HEK293 (cell line): ENCODE measurements at regions of chr17 and their contacts with region 1.

Region 1: DNA sequence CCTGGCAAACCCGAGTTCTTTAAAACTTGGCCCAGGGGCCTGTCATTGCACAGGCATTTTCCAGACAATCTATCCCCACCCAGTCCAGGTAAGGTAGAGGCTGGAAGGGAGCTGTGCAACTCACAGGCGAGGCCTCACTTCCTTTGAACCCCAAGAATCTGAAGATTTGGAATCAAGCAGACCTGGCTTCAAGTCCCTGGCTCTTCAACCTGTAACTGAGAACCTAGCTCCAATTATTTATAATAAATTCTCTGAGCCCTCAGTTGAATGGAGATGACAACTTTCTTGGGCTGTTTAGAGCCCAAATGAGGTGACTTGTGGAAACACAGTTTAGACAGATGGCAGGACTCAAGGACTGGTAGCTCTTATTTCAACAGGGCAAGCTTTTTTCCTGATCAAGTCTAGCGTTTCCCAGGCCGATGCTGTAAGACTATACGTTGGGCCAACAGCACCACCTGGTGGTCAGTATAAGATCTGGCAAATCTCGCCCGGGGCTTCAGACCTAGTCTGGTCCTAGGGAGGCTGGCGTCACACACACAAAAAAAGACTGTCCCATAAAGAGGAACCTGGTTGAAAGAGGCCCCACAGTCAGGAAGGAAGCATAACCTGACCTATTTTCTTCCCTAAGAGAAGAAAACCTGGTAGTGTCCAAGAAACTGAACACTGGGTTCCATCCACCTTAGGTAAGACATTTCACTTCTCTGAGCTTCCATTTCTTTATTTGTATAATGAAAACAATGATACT is 117.9 kb downstream of the C17orf67 start:
- H3K4me3 ChIP-seq: no peak overlapping the region
- H3K27ac ChIP-seq: no peak overlapping the region
- H3K4me1 ChIP-seq: no peaks in the 10 kb centered on the region
- CTCF ChIP-seq: peak; percentile 52; the same call in 1 of the 2 replicates

Region 2: GRCh38 chr17:56577190-56577842 is 138.5 kb before region 1 on chr17:
- CTCF ChIA-PET with region 1: interaction called, 10 read pairs
- POLR2A ChIA-PET with region 1: no interaction called
- H3K4me3 ChIP-seq: no peak overlapping the region
- H3K27ac ChIP-seq: no peak overlapping the region
- H3K4me1 ChIP-seq: no peaks in the 10 kb centered on the region
- CTCF ChIP-seq: no peak

Region 3: DNA sequence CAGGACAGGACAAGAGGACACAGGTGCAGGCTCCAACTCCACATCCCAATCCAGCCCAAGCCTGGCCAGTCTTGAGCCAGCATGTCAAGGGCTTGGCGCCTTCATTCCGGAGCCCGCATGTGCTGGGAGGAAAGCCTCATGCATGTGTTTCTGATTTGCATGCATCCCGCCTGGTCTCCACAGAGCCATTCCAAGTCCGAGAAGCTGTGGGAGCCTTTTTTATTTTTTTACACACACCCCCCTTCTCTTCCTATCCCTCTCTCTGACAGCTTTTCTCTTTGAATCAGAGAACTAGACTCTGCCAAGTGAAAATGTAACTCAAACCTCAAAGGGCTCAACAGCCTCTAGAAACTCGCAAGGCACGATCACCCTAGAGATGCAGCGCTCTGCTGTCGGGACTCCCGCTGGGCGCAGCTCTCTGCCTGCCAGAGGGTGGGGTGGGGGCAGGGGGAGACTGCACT is 77.2 kb before region 1 on chr17:
- CTCF ChIA-PET with region 1: interaction called, 16 read pairs
- POLR2A ChIA-PET with region 1: no interaction called
- H3K4me3 ChIP-seq: no peak overlapping the region
- H3K27ac ChIP-seq: no peak overlapping the region
- H3K4me1 ChIP-seq: no peaks in the 10 kb centered on the region; the same call in 1 of the 2 replicates
- CTCF ChIP-seq: no peak

Region 4: GRCh38 chr17:56679115-56679766 is 36.5 kb before region 1 on chr17:
- CTCF ChIA-PET with region 1: interaction called, 103 read pairs
- POLR2A ChIA-PET with region 1: no interaction called
- H3K4me3 ChIP-seq: no peak overlapping the region
- H3K27ac ChIP-seq: no peak overlapping the region
- H3K4me1 ChIP-seq: no peaks in the 10 kb centered on the region
- CTCF ChIP-seq: no peak

Region 5: DNA sequence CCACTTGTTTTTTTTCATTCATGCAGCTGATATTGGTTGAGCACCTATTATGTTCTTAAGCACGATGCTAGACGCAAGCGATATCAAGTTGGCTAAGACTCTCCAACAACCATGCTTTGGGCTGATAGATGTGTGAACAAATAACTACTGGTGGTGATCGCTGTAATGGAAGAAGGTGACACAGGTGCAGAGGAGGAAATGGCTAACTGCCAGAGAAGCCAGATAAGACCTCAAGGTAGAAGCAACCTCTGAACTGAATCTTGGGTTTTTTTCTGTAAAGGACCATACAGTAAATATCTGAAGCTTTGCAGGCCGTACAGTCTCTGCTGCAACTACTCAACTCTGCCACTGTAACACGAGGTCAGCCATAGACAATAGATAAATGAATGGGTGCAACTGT is 20.1 kb after region 1 on chr17:
- CTCF ChIA-PET with region 1: interaction called, 10 read pairs
- POLR2A ChIA-PET with region 1: no interaction called
- H3K4me3 ChIP-seq: no peak overlapping the region
- H3K27ac ChIP-seq: no peak overlapping the region
- H3K4me1 ChIP-seq: no peaks in the 10 kb centered on the region
- CTCF ChIP-seq: no peak